ENCODE measurements at regions of chr6 and their contacts with region 1.

Region 1: GRCh38 chr6:38259736-38260135 is 380.0 kb downstream of the BTBD9 start:
- DNase-seq: no peak
- H3K4me3 ChIP-seq: no peak overlapping the region
- H3K27ac ChIP-seq: no peak overlapping the region
- H3K4me1 ChIP-seq: peaks cover 0 to 6% of the 10 kb centered on the region in 2 donors
- H3K27me3 ChIP-seq: no peaks in the 10 kb centered on the region
- CTCF ChIP-seq: no peak
- POLR2A ChIP-seq: no peak

Region 2: DNA sequence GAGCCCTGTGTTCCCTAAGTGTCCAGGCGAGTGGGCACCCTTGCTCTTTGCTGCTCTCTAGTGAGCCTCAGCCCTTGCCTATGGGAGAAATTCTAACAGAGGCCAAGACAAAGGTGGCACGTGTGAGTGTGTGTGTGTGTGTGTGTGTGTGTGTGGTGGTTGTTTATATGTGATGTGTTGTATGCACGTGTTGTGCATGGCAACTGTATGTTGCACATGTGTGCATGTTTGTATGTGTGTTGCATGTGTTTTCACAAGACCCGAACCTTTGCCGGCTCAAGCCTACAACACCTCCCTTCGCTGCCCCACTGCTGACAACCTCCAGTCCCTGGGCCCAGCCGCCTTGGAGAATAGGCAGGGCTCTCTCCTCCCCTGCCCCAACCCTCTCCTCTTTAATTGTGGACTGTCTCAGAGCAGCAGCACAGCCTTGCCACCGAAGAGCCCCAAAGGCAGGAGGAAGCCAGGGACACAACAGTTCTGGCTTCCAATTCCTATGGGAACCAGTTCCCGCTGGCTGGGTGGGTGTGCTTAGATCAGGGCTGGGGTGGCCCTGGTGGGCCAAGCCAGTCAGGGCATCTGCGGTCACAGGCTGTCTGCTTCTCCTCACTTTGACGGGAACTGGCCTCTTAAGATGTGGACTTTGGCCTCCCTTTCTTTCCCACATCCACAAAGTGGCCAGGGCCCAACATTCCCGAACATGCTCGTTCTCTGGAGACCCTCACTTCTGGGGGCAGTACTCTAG is 1060.1 kb after region 1 on chr6:
- intact Hi-C with region 1: loop called (anchors 5 kb)
- DNase-seq: no peak
- H3K4me3 ChIP-seq: no peak overlapping the region
- H3K27ac ChIP-seq: no peak overlapping the region
- H3K4me1 ChIP-seq: no peaks in the 10 kb centered on the region
- H3K27me3 ChIP-seq: peaks cover 0 to 3% of the 10 kb centered on the region in 2 donors
- CTCF ChIP-seq: no peak
- POLR2A ChIP-seq: no peak